IMR-90 (cell line): ENCODE measurements at regions of chr9 and their contacts with region 1.

Region 1: DNA sequence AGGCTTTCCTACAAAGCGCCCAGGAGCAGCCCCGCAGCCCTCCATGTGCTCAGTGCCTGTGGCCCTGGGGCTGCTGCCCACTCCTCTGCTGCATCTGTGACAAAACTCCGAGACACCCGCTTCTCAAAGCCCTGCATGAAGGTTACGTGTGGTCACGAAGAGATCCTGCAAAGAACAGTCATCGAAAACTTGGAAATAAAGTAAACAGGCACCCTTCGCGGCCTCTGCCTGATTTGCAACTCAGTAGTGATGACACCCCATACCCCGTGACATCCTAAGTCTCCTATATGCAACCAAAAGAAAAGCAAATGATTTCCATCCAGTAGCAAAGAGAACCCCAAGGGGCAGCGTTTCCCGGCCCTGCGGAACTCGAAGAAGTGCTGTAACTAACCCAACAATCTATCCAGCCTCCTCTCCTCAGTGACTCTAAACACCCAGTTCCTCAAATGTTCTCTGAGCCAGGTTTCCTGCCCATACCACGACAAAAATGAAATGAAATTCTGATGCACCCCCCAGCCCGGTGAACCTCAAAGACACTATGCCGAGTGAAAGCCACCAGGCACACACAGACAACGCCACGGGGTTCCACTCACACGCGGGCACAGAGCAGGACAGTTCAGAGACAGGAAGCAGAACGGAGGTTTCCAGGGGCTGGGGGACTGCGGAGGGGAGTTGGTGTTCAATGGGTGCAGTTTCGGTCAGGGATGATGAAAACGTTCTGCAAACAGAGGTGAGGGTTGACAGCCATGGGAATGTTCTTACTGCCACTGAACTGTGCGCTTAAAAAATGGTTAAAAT is 19.0 kb downstream of the NACC2 start:
- DNase-seq: no peak
- ATAC-seq: no peak
- H3K4me3 ChIP-seq: no peak overlapping the region
- H3K27ac ChIP-seq: no peak overlapping the region
- H3K4me1 ChIP-seq: peaks cover 2% of the 10 kb centered on the region; the same call in 1 of the 2 replicates
- H3K27me3 ChIP-seq: no peaks in the 10 kb centered on the region
- CTCF ChIP-seq: no peak
- POLR2A ChIP-seq: no peak
- RAD21 ChIP-seq: no peak

Region 2: DNA sequence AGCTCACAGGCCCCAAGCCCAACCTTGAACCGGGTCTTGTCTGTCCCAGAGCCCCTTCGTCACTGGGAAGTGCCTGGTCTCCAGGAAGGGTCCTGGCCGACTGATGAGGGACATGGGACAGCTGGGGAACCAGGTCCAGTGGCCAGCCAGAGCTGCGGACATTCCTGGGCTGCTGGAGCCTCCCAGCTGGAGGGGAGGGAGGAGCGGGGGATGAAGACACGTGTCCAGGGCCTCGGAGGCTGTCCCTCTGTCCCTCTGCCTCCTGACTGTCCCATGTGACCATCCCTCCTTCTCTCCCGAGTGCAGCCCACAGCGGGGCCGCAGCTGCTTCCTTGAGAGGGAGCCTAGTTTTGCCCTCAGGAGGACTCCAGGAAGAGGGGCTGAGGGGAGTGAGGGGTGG is 73.2 kb before region 1 on chr9:
- CTCF ChIA-PET with region 1: no interaction called
- POLR2A ChIA-PET with region 1: interaction called, 15 read pairs
- dilution Hi-C with region 1: no loop called
- in situ Hi-C with region 1: no loop called
- intact Hi-C with region 1: no loop called
- DNase-seq: no peak
- ATAC-seq: peak; percentile 61
- H3K4me3 ChIP-seq: no peak overlapping the region
- H3K27ac ChIP-seq: no peak overlapping the region
- H3K4me1 ChIP-seq: peaks cover 11% of the 10 kb centered on the region
- H3K27me3 ChIP-seq: no peaks in the 10 kb centered on the region
- CTCF ChIP-seq: no peak
- POLR2A ChIP-seq: no peak
- RAD21 ChIP-seq: no peak

Region 3: DNA sequence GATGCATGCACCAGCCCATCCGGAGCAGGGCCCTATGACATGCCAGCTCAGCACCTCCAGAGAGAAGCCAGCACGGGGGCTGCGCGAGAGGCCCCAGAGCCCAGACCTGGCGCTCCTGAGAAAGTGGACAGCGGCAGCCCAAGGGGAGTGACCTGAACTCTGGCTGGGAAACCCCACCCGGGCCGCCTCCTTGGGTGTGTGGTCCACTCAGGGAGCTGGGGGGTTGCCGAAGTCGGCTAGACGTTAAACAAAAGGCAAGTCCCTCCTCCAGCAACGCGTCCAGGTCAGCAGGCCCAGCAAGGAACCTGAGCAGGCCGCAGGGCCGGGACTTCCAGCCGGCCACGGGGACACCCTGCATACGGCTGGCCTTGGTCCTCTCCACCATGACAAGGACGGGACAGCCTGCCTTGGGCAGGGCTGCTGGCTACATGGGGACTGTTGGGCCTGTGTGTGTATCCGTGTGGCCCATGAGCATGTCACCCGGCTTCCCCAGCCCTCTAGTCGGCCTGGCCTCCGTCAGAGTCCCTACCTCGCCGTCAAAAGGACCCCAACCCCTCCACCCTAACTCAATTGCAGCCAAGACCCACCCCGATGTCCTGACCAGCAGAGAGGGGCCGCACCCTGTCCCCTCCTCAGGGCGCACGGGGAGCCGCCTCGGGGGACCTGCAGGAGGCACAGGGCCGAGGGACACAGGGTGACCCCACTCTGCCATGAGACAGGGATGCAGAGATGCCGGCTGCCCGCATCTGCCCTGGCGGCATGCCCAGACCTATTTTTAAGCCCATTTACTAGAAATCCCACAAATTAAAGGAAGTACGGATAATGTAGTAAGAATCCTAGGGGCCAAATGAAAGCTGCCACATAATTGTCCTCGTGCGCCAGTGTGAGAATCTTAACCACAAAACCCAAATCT is 16.5 kb before region 1 on chr9:
- CTCF ChIA-PET with region 1: no interaction called
- POLR2A ChIA-PET with region 1: no interaction called
- dilution Hi-C with region 1: no loop called
- in situ Hi-C with region 1: no loop called
- intact Hi-C with region 1: no loop called
- DNase-seq: peak; percentile 62
- ATAC-seq: peak; percentile 19; the same call in 1 of the 2 replicates
- H3K4me3 ChIP-seq: no peak overlapping the region
- H3K27ac ChIP-seq: no peak overlapping the region
- H3K4me1 ChIP-seq: peaks cover 22% of the 10 kb centered on the region
- H3K27me3 ChIP-seq: no peaks in the 10 kb centered on the region
- CTCF ChIP-seq: no peak
- POLR2A ChIP-seq: no peak
- RAD21 ChIP-seq: no peak